Activated B cell treated with CpG ODN at 0.5 μM for 24 hours (primary cell): ENCODE measurements at regions of chr21 and their contacts with region 1.

Region 1: GRCh38 chr21:33441489-33442477 is 38.0 kb downstream of the TMEM50B start:
- DNase-seq: peak; percentile 61
- ATAC-seq: peak; percentile 92
- H3K4me3 Mint-ChIP-seq: peak overlapping the region; percentile 58
- H3K27ac Mint-ChIP-seq: peak overlapping the region; percentile 92
- H3K4me1 Mint-ChIP-seq: peaks cover 73% of the 10 kb centered on the region
- H3K27me3 Mint-ChIP-seq: no peaks in the 10 kb centered on the region
- CTCF ChIP-seq: no peak

Region 2: DNA sequence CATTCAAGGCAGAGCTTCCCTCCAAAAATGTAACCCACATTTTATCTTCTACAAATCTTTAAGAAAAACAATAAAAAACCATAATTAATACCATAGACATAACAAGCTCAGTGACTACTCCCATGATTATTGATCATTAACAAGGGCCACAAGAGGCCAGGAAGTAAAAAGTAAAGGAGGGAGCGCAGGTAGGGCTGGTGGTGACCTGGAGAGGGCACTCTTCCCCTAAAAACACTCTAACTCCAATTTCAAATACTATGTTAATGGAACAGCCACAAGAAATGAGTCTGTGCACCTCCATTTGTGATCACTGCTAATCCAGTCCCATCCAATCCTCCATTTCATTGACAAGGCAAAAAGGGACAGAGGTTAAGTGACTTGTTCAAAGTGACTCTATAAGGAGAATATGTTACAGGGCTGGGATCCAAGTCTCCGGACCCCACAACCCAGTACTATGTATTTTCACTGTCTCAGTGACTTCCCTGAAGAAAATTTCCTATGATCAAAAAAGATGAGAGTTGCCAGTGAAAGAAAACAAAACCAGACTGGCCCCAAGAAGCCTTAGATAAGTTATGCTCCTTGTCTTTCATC is 788.4 kb before region 1 on chr21:
- CTCF ChIA-PET with region 1: no interaction called
- POLR2A ChIA-PET with region 1: no interaction called
- intact Hi-C with region 1: loop called (anchors 5 kb)
- DNase-seq: no peak
- ATAC-seq: peak; percentile 52
- H3K4me3 Mint-ChIP-seq: no peak overlapping the region
- H3K27ac Mint-ChIP-seq: no peak overlapping the region
- H3K4me1 Mint-ChIP-seq: no peaks in the 10 kb centered on the region
- H3K27me3 Mint-ChIP-seq: no peaks in the 10 kb centered on the region
- CTCF ChIP-seq: no peak

Region 3: GRCh38 chr21:32940079-32941014 is 501.4 kb before region 1 on chr21:
- CTCF ChIA-PET with region 1: interaction called, 20 read pairs
- POLR2A ChIA-PET with region 1: interaction called, 5 read pairs
- intact Hi-C with region 1: loop called (anchors 1 kb)
- DNase-seq: no peak
- ATAC-seq: no peak
- H3K4me3 Mint-ChIP-seq: no peak overlapping the region
- H3K27ac Mint-ChIP-seq: no peak overlapping the region
- H3K4me1 Mint-ChIP-seq: no peaks in the 10 kb centered on the region
- H3K27me3 Mint-ChIP-seq: peaks cover 9% of the 10 kb centered on the region
- CTCF ChIP-seq: no peak

Region 4: DNA sequence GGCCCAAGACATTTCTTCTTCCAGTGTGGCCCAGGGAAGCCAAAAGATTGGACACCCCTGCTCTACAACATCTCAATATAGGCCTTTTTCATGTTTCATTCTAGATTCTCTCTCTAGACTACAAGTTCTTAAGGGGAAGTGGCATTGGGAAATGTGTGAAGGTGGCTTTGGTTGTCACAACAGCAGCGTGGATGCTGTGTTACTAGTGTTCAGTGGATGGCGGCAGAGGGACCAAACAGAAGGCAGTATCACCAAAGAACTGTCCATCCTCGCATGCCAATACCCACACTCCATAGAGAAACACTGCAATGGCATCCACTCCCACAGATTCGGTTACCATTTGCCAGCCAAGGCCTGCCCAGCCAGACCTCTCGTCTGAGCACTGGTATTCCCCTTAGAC is 236.3 kb before region 1 on chr21:
- CTCF ChIA-PET with region 1: interaction called, 59 read pairs
- POLR2A ChIA-PET with region 1: interaction called, 19 read pairs
- intact Hi-C with region 1: no loop called
- DNase-seq: no peak
- ATAC-seq: peak; percentile 16
- H3K4me3 Mint-ChIP-seq: peak overlapping the region; percentile 73
- H3K27ac Mint-ChIP-seq: peak overlapping the region; percentile 94
- H3K4me1 Mint-ChIP-seq: peaks cover 53% of the 10 kb centered on the region
- H3K27me3 Mint-ChIP-seq: no peaks in the 10 kb centered on the region
- CTCF ChIP-seq: no peak

Region 5: DNA sequence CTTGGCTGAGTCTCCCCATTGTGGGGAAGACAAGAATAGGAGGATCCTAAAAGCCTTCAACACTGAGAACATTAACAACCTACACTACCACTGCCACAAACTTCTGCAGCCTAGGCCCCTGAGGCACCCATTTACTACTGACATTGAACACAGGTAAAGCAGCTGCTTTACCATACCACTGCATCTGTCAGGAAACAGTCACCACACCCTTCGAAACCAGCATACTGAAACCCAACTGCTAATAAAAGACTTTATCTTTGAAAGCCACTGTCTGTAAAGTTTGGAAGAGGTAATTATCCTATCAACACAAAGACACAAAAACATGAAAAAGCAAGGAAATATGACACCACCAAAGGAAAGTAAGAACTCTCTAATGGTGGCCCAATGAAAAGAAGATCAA is 109.6 kb before region 1 on chr21:
- CTCF ChIA-PET with region 1: interaction called, 17 read pairs
- POLR2A ChIA-PET with region 1: interaction called, 3 read pairs
- intact Hi-C with region 1: no loop called
- DNase-seq: no peak
- ATAC-seq: peak; percentile 75
- H3K4me3 Mint-ChIP-seq: peak overlapping the region; percentile 68
- H3K27ac Mint-ChIP-seq: peak overlapping the region; percentile 89
- H3K4me1 Mint-ChIP-seq: peaks cover 75% of the 10 kb centered on the region
- H3K27me3 Mint-ChIP-seq: no peaks in the 10 kb centered on the region
- CTCF ChIP-seq: no peak

Region 6: DNA sequence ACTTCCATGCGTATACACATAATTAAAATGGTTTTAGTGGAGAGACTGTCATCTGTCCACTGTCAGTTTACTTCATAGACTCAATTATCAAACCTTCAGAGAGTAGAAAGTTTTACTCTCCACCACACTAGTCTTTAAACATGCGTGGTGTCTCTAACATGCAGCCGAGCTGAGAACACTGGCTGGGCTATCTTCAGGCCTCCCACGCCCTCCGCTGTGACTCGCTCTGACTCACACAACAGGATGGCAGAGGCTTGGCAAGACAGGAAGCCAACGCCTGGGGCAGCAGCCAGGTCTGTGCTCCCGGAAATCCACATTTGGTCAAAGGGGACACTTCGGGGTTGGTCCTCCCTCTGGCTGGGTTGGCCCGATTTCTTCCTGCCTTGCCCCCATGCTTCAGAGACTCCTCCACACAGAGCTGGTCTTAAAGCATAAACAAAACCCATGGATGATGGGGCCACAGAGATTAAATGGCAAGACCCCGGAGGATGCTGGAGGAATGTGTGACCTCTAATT is 61.2 kb before region 1 on chr21:
- CTCF ChIA-PET with region 1: interaction called, 6 read pairs
- POLR2A ChIA-PET with region 1: interaction called, 7 read pairs
- intact Hi-C with region 1: loop called (anchors 1 kb)
- DNase-seq: peak; percentile 59
- ATAC-seq: peak; percentile 63
- H3K4me3 Mint-ChIP-seq: peak overlapping the region; percentile 59
- H3K27ac Mint-ChIP-seq: peak overlapping the region; percentile 97
- H3K4me1 Mint-ChIP-seq: peaks cover 84% of the 10 kb centered on the region
- H3K27me3 Mint-ChIP-seq: no peaks in the 10 kb centered on the region
- CTCF ChIP-seq: no peak

Region 7: GRCh38 chr21:33608559-33608958 is 166.8 kb after region 1 on chr21:
- CTCF ChIA-PET with region 1: interaction called, 5 read pairs
- POLR2A ChIA-PET with region 1: no interaction called
- intact Hi-C with region 1: loop called (anchors 1 kb)
- DNase-seq: no peak
- ATAC-seq: no peak
- H3K4me3 Mint-ChIP-seq: no peak overlapping the region
- H3K27ac Mint-ChIP-seq: no peak overlapping the region
- H3K4me1 Mint-ChIP-seq: no peaks in the 10 kb centered on the region
- H3K27me3 Mint-ChIP-seq: no peaks in the 10 kb centered on the region
- CTCF ChIP-seq: no peak